Activated CD4-positive, alpha-beta memory T cell treated with anti-CD3 and anti-CD28 coated beads for 36 hours (primary cell): ENCODE measurements at regions of chr2 and their contacts with region 1.

Region 1: GRCh38 chr2:165953655-165954606 is at the start of gene TTC21B:
- DNase-seq: peak; percentile 95
- H3K4me3 Mint-ChIP-seq: peak within 1 kb of the TSS; percentile 28
- H3K27ac Mint-ChIP-seq: no peak within 1 kb of the TSS
- H3K4me1 Mint-ChIP-seq: peaks cover 18% of the 10 kb centered on the region
- H3K27me3 Mint-ChIP-seq: no peaks in the 10 kb centered on the region
- total RNA-seq, gene TTC21B: 20.0 to 21.3 TPM

Region 2: GRCh38 chr2:165794536-165794928 is 159.4 kb before region 1 on chr2:
- CTCF ChIA-PET with region 1: no interaction called
- POLR2A ChIA-PET with region 1: no interaction called
- intact Hi-C with region 1: loop called (anchors 1 kb)
- DNase-seq: peak; percentile 79
- H3K4me3 Mint-ChIP-seq: peak overlapping the region; percentile 84
- H3K27ac Mint-ChIP-seq: peak overlapping the region; percentile 71
- H3K4me1 Mint-ChIP-seq: peaks cover 16% of the 10 kb centered on the region
- H3K27me3 Mint-ChIP-seq: peaks cover 22% of the 10 kb centered on the region

Region 3: DNA sequence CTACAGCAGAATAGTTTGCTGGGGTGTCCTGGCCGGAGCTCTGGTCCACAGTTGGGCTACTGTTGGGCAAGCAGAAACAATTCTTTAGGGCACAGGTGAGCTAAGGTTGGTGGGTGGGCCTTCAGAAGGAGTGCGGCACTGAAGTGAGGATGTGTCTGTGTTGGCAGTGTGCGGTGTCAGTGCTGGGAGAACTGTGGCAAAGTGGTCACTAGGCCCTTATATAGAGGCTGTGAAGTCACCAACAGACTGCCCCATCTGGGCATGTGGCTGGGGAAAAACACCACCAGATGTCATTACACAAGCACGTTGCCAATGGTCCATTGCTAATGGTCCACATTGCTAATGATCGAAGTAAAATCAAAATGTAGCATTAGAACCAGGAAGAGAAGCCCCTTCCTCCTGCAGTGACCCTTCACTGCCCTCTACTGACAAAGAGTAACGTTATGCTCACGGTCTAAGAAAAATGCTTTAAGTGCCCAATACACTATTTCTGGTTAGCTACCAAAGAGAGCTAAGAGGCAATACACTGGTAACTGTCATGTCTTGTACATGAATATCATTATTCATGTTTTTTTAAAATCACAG is 152.6 kb after region 1 on chr2:
- CTCF ChIA-PET with region 1: interaction called, 4 read pairs
- POLR2A ChIA-PET with region 1: no interaction called
- intact Hi-C with region 1: loop called (anchors 1 kb)
- DNase-seq: no peak
- H3K4me3 Mint-ChIP-seq: no peak overlapping the region
- H3K27ac Mint-ChIP-seq: no peak overlapping the region
- H3K4me1 Mint-ChIP-seq: peaks cover under 1% of the 10 kb centered on the region
- H3K27me3 Mint-ChIP-seq: no peaks in the 10 kb centered on the region

Region 4: DNA sequence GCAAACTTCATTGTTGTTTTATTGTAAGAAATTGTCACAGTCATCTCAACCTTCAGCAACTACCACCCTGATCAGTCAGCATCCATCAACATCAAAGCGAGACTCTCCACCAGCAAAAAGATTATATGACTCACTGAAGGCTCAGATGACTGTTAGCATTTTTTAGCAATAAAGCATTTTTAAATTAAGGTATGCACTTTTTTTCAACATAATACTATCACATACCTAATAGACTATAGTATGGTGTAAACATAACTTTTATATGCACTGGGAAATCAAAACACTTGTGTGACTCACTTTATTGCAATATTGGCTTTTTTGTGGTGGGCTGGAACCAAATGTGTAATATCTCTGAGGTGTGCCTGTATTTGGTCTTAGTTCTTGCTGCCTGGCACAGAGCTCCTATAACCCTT is 158.3 kb after region 1 on chr2:
- CTCF ChIA-PET with region 1: interaction called, 4 read pairs
- POLR2A ChIA-PET with region 1: no interaction called
- intact Hi-C with region 1: loop called (anchors 2 kb)
- DNase-seq: peak; percentile 13
- H3K4me3 Mint-ChIP-seq: no peak overlapping the region
- H3K27ac Mint-ChIP-seq: no peak overlapping the region
- H3K4me1 Mint-ChIP-seq: peaks cover 11% of the 10 kb centered on the region
- H3K27me3 Mint-ChIP-seq: no peaks in the 10 kb centered on the region

Region 5: GRCh38 chr2:166127217-166128155 is 173.6 kb after region 1 on chr2 and contains the start of gene SCN1A:
- CTCF ChIA-PET with region 1: interaction called, 30 read pairs
- POLR2A ChIA-PET with region 1: interaction called, 3 read pairs
- intact Hi-C with region 1: loop called (anchors 1 kb)
- DNase-seq: no peak
- H3K4me3 Mint-ChIP-seq: no peak within 1 kb of the TSS
- H3K27ac Mint-ChIP-seq: no peak within 1 kb of the TSS
- H3K4me1 Mint-ChIP-seq: peaks cover 4% of the 10 kb centered on the region
- H3K27me3 Mint-ChIP-seq: peaks cover 10% of the 10 kb centered on the region
- total RNA-seq, gene SCN1A: not detected

Region 6: DNA sequence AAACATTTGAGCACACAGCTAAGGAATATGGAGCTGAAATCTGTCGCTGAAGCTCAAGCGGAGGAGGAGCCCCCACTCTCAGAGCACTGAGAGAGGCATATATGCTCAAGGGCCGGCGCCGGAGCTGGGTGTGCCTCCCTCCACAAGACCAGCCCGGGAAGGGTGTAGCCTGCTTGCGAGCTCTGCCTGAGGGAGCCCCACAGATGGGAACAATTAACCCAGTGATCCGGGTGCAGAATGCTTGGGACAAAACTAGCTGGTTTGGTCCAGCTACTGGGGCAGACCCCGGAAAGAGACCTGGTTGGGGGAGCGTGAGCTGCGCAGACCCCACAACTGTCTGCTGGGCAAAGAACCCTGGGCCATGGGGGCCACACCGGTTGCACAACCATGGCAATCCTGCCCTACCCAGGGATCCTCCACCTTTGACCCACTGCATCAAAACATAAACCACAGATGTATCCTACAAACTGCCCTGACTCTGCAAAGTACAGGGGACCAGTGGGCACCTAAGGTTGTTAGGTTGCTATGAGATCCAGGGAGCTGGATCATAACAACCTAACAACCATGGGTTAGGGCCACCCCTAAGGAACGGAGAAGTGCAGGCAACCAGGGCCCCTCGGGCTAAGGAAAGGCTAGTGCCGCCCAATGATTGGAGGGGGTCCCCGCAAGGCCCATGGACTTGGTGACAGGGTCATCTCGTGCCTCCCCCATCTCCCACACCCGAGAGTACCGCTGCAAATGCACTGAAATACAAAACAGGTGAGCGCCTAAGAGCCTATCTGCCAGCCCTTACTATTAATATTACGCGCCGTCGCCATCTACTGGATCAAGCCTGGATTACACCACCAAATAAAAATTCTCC is 227.3 kb after region 1 on chr2:
- CTCF ChIA-PET with region 1: interaction called, 5 read pairs
- POLR2A ChIA-PET with region 1: no interaction called
- intact Hi-C with region 1: loop called (anchors 5 kb)
- DNase-seq: peak; percentile 42
- H3K4me3 Mint-ChIP-seq: no peak overlapping the region
- H3K27ac Mint-ChIP-seq: no peak overlapping the region
- H3K4me1 Mint-ChIP-seq: no peaks in the 10 kb centered on the region
- H3K27me3 Mint-ChIP-seq: no peaks in the 10 kb centered on the region